ENCODE measurements at regions of chr3 and their contacts with region 1.

Region 1: DNA sequence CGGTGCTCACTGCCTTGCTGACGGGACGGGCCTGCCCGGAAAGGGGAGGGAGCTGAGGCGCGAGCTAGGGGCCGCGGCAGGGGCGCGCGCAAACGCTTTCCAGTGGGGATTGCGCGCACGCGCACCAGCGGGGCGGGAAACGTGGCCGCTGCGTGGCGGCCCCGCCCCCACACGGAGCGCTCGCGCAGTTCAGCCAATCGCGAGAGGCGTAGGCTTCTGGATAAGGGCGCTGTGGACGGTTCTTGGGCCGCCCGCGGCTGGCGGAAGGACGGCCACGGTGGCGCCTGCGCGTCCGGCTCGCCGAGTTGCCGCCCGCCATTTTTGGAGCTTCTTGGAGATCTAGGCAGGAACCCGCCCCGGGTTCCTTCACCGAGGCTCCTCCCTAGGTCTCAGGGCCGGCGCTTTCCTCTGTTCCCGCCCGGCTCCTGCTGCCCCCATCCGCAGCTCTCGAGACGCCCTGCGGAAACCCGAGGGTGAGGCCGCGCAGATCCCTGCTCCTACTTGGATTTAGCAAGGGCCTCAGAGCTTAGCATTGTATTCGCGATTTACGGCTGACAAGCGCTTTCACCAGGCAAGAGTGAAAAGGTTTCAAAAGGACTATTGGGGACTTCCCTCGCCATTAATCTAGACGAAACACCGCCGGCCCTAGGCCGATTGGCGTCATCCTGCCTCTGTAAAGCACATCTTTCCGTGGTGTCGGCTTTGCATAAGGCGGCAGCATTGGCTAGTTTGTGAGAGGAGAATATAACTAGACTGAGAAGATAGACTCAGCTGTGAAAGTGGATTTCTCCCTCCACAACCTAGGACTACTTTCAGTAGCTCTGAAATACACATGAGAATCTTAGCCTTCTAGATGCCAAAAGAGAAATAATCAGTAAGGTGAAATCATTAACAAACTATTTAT is 496 bp upstream of the STAG1 start:
- DNase-seq: peak; percentile 99
- ATAC-seq: peak; percentile 90
- H3K4me3 Mint-ChIP-seq: peak overlapping the region; percentile 73
- H3K27ac Mint-ChIP-seq: peak overlapping the region; percentile 86
- H3K4me1 Mint-ChIP-seq: peaks cover 36% of the 10 kb centered on the region
- H3K27me3 Mint-ChIP-seq: no peaks in the 10 kb centered on the region

Region 2: GRCh38 chr3:136075218-136075808 is 677.4 kb before region 1 on chr3:
- CTCF ChIA-PET with region 1: interaction called, 51 read pairs
- POLR2A ChIA-PET with region 1: interaction called, 7 read pairs
- DNase-seq: peak; percentile 79
- ATAC-seq: peak; percentile 65
- H3K4me3 Mint-ChIP-seq: no peak overlapping the region
- H3K27ac Mint-ChIP-seq: no peak overlapping the region
- H3K4me1 Mint-ChIP-seq: peaks cover 8% of the 10 kb centered on the region
- H3K27me3 Mint-ChIP-seq: peaks cover 2% of the 10 kb centered on the region

Region 3: GRCh38 chr3:136305878-136306277 is 446.8 kb before region 1 on chr3:
- CTCF ChIA-PET with region 1: interaction called, 56 read pairs
- POLR2A ChIA-PET with region 1: interaction called, 7 read pairs
- DNase-seq: no peak
- ATAC-seq: no peak
- H3K4me3 Mint-ChIP-seq: no peak overlapping the region
- H3K27ac Mint-ChIP-seq: peak overlapping the region; percentile 57
- H3K4me1 Mint-ChIP-seq: peaks cover 2% of the 10 kb centered on the region
- H3K27me3 Mint-ChIP-seq: no peaks in the 10 kb centered on the region

Region 4: DNA sequence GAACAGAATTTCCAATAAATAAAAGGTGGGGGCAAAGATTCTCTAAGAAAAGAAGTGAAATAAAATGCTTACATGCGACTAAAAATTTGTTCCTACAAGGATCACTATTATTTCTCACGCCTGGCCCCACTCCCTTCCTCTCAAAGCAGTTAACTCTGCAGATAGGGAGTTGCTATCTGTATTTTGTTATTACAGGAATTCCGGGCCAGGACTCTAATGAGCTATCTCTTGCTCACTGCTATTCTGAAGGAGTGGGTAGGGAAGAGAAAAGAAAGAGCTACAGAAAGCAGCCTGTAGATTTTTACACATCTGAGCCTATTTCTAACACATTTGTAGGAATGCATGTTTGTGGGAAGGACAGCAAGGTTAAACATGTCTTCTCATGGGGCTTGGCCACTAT is 362.1 kb before region 1 on chr3:
- CTCF ChIA-PET with region 1: interaction called, 46 read pairs
- POLR2A ChIA-PET with region 1: interaction called, 8 read pairs
- DNase-seq: no peak
- ATAC-seq: no peak
- H3K4me3 Mint-ChIP-seq: no peak overlapping the region
- H3K27ac Mint-ChIP-seq: no peak overlapping the region
- H3K4me1 Mint-ChIP-seq: no peaks in the 10 kb centered on the region
- H3K27me3 Mint-ChIP-seq: no peaks in the 10 kb centered on the region

Region 5: GRCh38 chr3:136741063-136741462 is 11.6 kb before region 1 on chr3:
- CTCF ChIA-PET with region 1: interaction called, 18 read pairs
- POLR2A ChIA-PET with region 1: interaction called, 4 read pairs
- DNase-seq: no peak
- ATAC-seq: no peak
- H3K4me3 Mint-ChIP-seq: no peak overlapping the region
- H3K27ac Mint-ChIP-seq: no peak overlapping the region
- H3K4me1 Mint-ChIP-seq: peaks cover 29% of the 10 kb centered on the region
- H3K27me3 Mint-ChIP-seq: no peaks in the 10 kb centered on the region

Region 6: GRCh38 chr3:136780741-136781140 is 28.1 kb after region 1 on chr3:
- CTCF ChIA-PET with region 1: no interaction called
- POLR2A ChIA-PET with region 1: no interaction called
- DNase-seq: no peak
- ATAC-seq: no peak
- H3K4me3 Mint-ChIP-seq: no peak overlapping the region
- H3K27ac Mint-ChIP-seq: no peak overlapping the region
- H3K4me1 Mint-ChIP-seq: no peaks in the 10 kb centered on the region
- H3K27me3 Mint-ChIP-seq: peaks cover 3% of the 10 kb centered on the region

Region 7: GRCh38 chr3:136885357-136886213 is 132.9 kb after region 1 on chr3:
- CTCF ChIA-PET with region 1: interaction called, 11 read pairs
- POLR2A ChIA-PET with region 1: interaction called, 4 read pairs
- DNase-seq: no peak
- ATAC-seq: peak; percentile 81
- H3K4me3 Mint-ChIP-seq: peak overlapping the region; percentile 56
- H3K27ac Mint-ChIP-seq: peak overlapping the region; percentile 88
- H3K4me1 Mint-ChIP-seq: peaks cover 54% of the 10 kb centered on the region
- H3K27me3 Mint-ChIP-seq: no peaks in the 10 kb centered on the region

Region 8: GRCh38 chr3:136954980-136955780 is 202.5 kb after region 1 on chr3:
- CTCF ChIA-PET with region 1: no interaction called
- POLR2A ChIA-PET with region 1: no interaction called
- DNase-seq: no peak
- ATAC-seq: no peak
- H3K4me3 Mint-ChIP-seq: no peak overlapping the region
- H3K27ac Mint-ChIP-seq: no peak overlapping the region
- H3K4me1 Mint-ChIP-seq: peaks cover 4% of the 10 kb centered on the region
- H3K27me3 Mint-ChIP-seq: no peaks in the 10 kb centered on the region